Gastrocnemius medialis (tissue), 4 donors: ENCODE measurements at regions of chr3 and their contacts with region 1.

Region 1: DNA sequence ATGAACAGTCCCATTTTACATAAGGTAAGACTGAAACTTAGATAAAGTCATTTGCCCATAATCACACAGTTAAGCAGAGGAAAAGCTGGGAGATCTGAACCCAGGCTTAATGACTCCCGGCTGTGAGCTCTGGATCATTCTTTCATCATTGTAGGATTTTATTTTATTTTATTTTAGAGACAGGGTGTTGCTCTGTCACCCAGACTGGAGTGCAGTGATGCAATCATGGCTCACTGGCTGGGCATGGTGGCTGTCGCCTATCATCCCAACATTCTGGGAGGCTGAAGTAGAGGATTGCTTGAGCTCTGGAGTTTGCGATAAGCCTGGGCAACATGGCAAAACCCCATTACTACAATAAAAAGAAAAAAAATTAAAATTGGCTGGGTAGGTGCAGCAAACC is 31.2 kb upstream of the RAF1 start:
- DNase-seq: no peak
- ATAC-seq: no peak
- H3K4me3 ChIP-seq: no peak overlapping the region
- H3K27ac ChIP-seq: peak overlapping the region; percentile 86 to 93 (median 89)
- H3K4me1 ChIP-seq: peaks cover 10 to 16% of the 10 kb centered on the region in 2 donors
- H3K27me3 ChIP-seq: no peaks in the 10 kb centered on the region
- CTCF ChIP-seq: no peak
- POLR2A ChIP-seq: no peak

Region 2: GRCh38 chr3:12622335-12622734 is 72.8 kb before region 1 on chr3:
- in situ Hi-C with region 1: no loop called
- intact Hi-C with region 1: no loop called
- DNase-seq: no peak
- ATAC-seq: no peak
- H3K4me3 ChIP-seq: no peak overlapping the region
- H3K27ac ChIP-seq: peak overlapping the region; percentile 1 to 38 (median 30)
- H3K4me1 ChIP-seq: peaks cover 31% of the 10 kb centered on the region in 2 donors
- H3K27me3 ChIP-seq: no peaks in the 10 kb centered on the region
- CTCF ChIP-seq: no peak
- POLR2A ChIP-seq: no peak

Region 3: GRCh38 chr3:12663936-12664908 is 30.9 kb before region 1 on chr3 and contains the start of gene RAF1:
- in situ Hi-C with region 1: no loop called
- intact Hi-C with region 1: loop called (anchors 2 kb)
- DNase-seq: peak; percentile 97 to 99
- ATAC-seq: peak; percentile 76 to 83
- H3K4me3 ChIP-seq: peak within 1 kb of the TSS; percentile 96 to 100 (median 98)
- H3K27ac ChIP-seq: peak within 1 kb of the TSS; percentile 99 to 100 (median 100)
- H3K4me1 ChIP-seq: peaks cover 29 to 37% of the 10 kb centered on the region in 2 donors
- H3K27me3 ChIP-seq: no peaks in the 10 kb centered on the region
- CTCF ChIP-seq: no peak
- POLR2A ChIP-seq: peak; percentile 87 to 95
- total RNA-seq, gene RAF1: 212 to 346 (median 246) TPM